PC-9 (cell line): ENCODE measurements at regions of chr14 and their contacts with region 1.

Region 1: DNA sequence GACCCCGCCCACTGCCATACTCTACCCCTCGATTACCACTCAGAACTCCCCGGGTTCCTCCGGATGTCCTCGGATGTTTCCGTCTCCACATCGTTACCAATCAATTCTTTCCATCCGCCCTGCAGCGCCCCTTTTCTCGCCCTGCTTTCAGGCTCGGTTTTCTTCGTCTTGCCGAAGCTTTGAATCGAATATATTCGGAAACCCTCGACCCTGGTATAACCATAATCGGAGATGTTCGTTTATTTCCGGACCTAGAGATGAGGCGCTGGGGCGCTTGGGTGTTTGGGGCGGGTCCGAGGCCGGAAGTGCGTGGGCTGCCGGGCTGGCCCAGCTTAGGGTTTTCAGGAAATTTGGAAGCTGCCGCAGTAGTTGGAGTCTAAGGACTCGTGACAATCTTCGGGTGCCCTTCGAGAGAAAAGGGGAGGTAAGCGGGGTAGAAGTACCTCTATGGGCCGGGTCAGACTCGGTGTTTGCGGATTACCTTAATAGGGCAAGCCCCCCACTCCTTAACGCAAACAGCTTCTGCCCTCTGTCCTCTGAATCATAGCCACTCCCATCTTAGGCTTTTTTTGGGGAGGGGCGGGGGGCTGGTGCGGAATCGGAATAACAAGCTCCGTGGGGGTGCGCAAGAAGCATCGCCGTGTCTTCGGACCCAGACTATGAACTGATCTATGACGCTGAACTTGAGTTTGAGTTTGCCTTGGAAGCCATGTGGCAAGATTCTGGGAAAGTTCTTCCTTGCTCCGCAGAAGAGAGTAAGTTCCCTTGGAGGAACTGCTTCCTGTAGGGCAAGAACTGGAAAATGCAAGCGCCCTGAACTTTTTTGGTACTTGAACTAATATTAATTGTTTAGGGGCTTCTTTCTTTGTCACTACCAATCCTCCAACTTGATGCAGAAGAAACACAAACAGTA is at the start of gene C14orf119:
- DNase-seq: peak; percentile 96
- H3K4me3 ChIP-seq: peak within 1 kb of the TSS; percentile 98
- H3K27ac ChIP-seq: peak within 1 kb of the TSS; percentile 89
- H3K4me1 ChIP-seq: peaks cover 25% of the 10 kb centered on the region
- H3K27me3 ChIP-seq: no peaks in the 10 kb centered on the region
- CTCF ChIP-seq: no peak
- total RNA-seq, gene C14orf119: 26.8 and 46.5 TPM in 2 replicates

Region 2: GRCh38 chr14:22865424-22866405 is 229.7 kb before region 1 on chr14:
- CTCF ChIA-PET with region 1: no interaction called
- POLR2A ChIA-PET with region 1: interaction called, 13 read pairs
- intact Hi-C with region 1: no loop called
- DNase-seq: no peak
- H3K4me3 ChIP-seq: no peak overlapping the region
- H3K27ac ChIP-seq: no peak overlapping the region
- H3K4me1 ChIP-seq: peaks cover 13% of the 10 kb centered on the region
- H3K27me3 ChIP-seq: no peaks in the 10 kb centered on the region
- CTCF ChIP-seq: no peak

Region 3: DNA sequence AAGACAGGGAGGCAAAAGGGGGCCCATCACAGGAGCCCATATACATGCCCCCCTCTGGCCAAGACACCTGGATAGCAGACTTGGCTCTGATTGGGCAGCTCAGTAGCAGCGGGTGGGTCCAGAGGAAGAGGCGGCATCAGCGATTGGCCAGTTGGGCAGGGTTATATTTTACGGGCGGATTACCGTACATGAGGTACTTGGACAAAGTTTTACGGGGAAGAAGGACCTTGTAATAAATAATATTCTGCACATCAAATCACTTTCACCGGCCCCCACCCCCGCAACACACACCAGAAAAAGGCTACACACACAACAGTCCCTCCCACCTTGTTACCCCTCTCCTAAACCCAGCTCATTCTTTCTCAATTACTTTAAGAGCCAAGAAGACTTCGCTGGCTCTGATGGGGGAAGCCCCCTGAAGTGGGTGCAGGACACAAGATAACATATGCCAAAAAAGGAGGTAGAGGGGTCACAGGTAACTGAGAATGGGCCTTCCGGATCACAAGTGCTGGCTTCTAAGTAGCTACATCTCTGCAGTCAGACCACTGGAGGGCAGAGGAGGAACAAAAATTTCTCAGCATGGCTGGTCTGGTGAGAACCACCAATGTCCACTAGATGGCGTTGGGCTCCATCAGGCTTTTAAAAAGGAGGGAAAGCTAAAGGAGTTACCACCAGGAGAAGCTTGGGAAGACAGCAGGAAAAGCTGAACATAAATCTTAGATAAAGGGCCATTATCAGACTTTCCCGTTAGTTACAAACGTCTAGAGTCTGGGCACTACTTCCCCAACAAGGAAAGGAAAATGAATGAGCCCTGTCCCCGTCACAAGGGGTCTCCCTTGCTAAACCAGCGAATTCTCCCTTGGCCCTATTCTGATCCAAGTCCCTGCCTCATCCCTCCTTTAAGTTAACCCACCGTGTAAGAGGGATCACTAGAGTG is 26.7 kb before region 1 on chr14:
- CTCF ChIA-PET with region 1: interaction called, 14 read pairs
- POLR2A ChIA-PET with region 1: interaction called, 4 read pairs
- intact Hi-C with region 1: no loop called
- DNase-seq: peak; percentile 72 to 77
- H3K4me3 ChIP-seq: no peak overlapping the region
- H3K27ac ChIP-seq: no peak overlapping the region
- H3K4me1 ChIP-seq: peaks cover 34% of the 10 kb centered on the region
- H3K27me3 ChIP-seq: no peaks in the 10 kb centered on the region
- CTCF ChIP-seq: peak; percentile 90

Region 4: GRCh38 chr14:23112359-23113178 is 17.1 kb after region 1 on chr14:
- CTCF ChIA-PET with region 1: interaction called, 10 read pairs
- POLR2A ChIA-PET with region 1: interaction called, 3 read pairs
- intact Hi-C with region 1: no loop called
- DNase-seq: peak in 1 of 2 experiments; percentile 62
- H3K4me3 ChIP-seq: no peak overlapping the region
- H3K27ac ChIP-seq: no peak overlapping the region
- H3K4me1 ChIP-seq: peaks cover 41% of the 10 kb centered on the region
- H3K27me3 ChIP-seq: no peaks in the 10 kb centered on the region
- CTCF ChIP-seq: no peak

Region 5: GRCh38 chr14:23301288-23301968 is 206.0 kb after region 1 on chr14:
- CTCF ChIA-PET with region 1: interaction called, 16 read pairs
- POLR2A ChIA-PET with region 1: no interaction called
- intact Hi-C with region 1: no loop called
- DNase-seq: peak; percentile 86 to 97
- H3K4me3 ChIP-seq: peak overlapping the region; percentile 71
- H3K27ac ChIP-seq: peak overlapping the region; percentile 72
- H3K4me1 ChIP-seq: peaks cover 17% of the 10 kb centered on the region
- H3K27me3 ChIP-seq: no peaks in the 10 kb centered on the region
- CTCF ChIP-seq: peak; percentile 68

Region 6: DNA sequence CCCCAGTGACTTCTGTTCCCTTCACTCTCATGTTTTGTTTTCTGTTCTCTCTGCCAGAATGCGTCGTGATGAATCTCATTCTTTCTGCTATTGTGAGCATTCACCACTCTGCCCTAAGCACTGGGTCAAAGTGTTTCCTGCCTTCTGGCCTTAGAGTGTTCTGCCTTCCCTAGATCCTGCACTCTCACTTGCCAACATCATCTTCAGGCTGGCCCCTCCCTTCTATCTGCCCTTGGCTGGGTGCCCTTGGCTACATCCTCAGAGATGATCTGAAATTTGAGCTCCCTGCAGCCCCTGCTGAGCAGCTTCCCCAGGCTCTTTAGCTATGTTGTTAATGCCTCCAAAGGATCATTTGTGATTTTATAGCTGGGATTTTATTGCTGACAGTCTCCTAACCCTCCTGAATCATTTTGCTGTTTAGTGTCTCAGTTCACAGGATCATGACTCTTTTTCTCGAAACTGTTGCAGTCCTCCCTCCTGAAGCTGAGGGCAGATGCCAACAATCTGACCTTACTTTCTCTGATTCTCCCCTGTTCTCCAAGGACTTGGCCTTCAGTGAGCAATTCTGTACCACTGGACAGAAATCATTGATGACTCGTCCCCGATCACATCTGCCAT is 545.2 kb after region 1 on chr14:
- CTCF ChIA-PET with region 1: no interaction called
- POLR2A ChIA-PET with region 1: no interaction called
- intact Hi-C with region 1: no loop called
- DNase-seq: peak; percentile 71 to 74
- H3K4me3 ChIP-seq: peak overlapping the region; percentile 62; the same call in 1 of the 2 replicates
- H3K27ac ChIP-seq: peak overlapping the region; percentile 82
- H3K4me1 ChIP-seq: peaks cover 59% of the 10 kb centered on the region
- H3K27me3 ChIP-seq: no peaks in the 10 kb centered on the region
- CTCF ChIP-seq: no peak